HepG2 (cell line): ENCODE measurements at regions of chr14 and their contacts with region 1.

Region 1: DNA sequence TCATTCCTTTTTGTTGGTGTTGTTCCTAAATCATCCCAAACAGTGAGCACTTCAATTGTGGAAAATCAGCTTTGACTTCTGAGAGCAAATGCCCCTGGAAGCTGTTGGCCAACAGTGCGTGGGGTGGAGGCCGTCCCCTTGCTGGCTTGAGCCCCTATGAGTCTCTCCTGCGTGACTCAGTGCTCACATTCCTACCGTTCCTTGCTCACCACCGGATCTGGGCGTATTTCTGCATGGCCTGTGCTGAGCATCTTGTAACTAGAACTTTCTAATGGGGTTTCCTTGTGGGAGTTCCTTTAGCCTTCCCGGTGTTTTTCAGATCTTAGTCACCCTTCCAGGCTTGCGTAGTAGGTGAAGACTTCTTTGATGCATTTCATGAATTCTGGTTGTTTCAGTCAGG is 14.7 kb downstream of the SERPINA1 start:
- DNase-seq: no peak
- ATAC-seq: no peak
- H3K4me3 ChIP-seq: no peak overlapping the region
- H3K27ac ChIP-seq: no peak overlapping the region
- H3K4me1 ChIP-seq: peaks cover 100% of the 10 kb centered on the region
- H3K27me3 ChIP-seq: no peaks in the 10 kb centered on the region
- CTCF ChIP-seq: no peak
- EP300 ChIP-seq: no peak
- POLR2A ChIP-seq: no peak
- RAD21 ChIP-seq: no peak

Region 2: GRCh38 chr14:94322648-94323570 is 50.8 kb before region 1 on chr14 and contains the start of gene SERPINA6:
- CTCF ChIA-PET with region 1: no interaction called
- POLR2A ChIA-PET with region 1: interaction called, 10 read pairs
- in situ Hi-C with region 1: no loop called
- intact Hi-C with region 1: loop called (anchors 2 kb)
- DNase-seq: peak; percentile 95
- ATAC-seq: peak; percentile 92
- H3K4me3 ChIP-seq: peak within 1 kb of the TSS; percentile 61 to 87 (median 67)
- H3K27ac ChIP-seq: peak within 1 kb of the TSS; percentile 87
- H3K4me1 ChIP-seq: peaks cover 72% of the 10 kb centered on the region
- H3K27me3 ChIP-seq: no peaks in the 10 kb centered on the region
- CTCF ChIP-seq: no peak
- EP300 ChIP-seq: peak in 1 of 2 experiments; percentile 60; a peak in 2 of 4 replicates
- POLR2A ChIP-seq: peak; percentile 84 to 99
- RAD21 ChIP-seq: peak; percentile 31; the same call in 1 of the 2 replicates
- total RNA-seq, gene SERPINA6: 144 and 260 TPM in 2 replicates

Region 3: GRCh38 chr14:94342334-94342934 is 31.3 kb before region 1 on chr14:
- CTCF ChIA-PET with region 1: no interaction called
- POLR2A ChIA-PET with region 1: interaction called, 10 read pairs
- in situ Hi-C with region 1: no loop called
- intact Hi-C with region 1: loop called (anchors 1 kb)
- DNase-seq: peak; percentile 82
- ATAC-seq: peak; percentile 25; the same call in 2 of the 3 replicates
- H3K4me3 ChIP-seq: no peak overlapping the region
- H3K27ac ChIP-seq: no peak overlapping the region
- H3K4me1 ChIP-seq: peaks cover 96% of the 10 kb centered on the region
- H3K27me3 ChIP-seq: no peaks in the 10 kb centered on the region; a peak in 1 of 5 replicates
- CTCF ChIP-seq: no peak
- EP300 ChIP-seq: peak in 1 of 2 experiments; percentile 45; a peak in 1 of 4 replicates
- POLR2A ChIP-seq: no peak
- RAD21 ChIP-seq: no peak

Region 4: DNA sequence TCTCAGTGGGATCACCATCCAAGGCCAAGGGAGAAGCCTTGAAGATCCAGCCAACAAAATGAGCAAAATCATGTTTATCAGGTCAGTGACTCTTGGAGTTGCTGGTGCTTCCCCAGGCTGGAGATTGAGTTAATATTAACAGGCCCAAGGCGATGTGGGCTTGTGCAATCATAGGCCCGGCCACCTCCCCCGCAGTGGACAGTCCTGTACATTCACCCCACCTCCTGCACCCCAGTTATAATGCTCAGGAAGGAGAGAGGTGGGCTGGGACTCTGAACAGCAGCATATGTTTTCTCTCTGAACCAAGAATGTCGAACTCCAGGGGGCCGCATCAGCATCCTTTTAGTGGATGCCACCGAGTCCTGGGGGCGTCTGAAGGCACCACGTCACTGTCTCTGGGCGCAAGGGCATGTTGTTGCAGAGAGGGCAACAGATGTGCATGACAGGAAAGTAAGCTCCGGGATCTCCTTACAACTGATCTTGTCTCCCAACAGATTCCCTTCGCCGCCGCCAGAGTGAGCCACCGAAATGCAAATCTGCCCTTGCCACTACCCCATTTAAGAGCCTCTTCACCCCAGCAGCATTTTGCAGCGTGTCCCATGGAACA is 18.4 kb before region 1 on chr14:
- CTCF ChIA-PET with region 1: interaction called, 3 read pairs
- POLR2A ChIA-PET with region 1: interaction called, 13 read pairs
- in situ Hi-C with region 1: no loop called
- intact Hi-C with region 1: loop called (anchors 1 kb)
- DNase-seq: peak; percentile 85
- ATAC-seq: peak; percentile 95
- H3K4me3 ChIP-seq: peak overlapping the region; percentile 40 to 65 (median 44); a peak in 5 of 6 replicates
- H3K27ac ChIP-seq: peak overlapping the region; percentile 63
- H3K4me1 ChIP-seq: peaks cover 61% of the 10 kb centered on the region
- H3K27me3 ChIP-seq: no peaks in the 10 kb centered on the region
- CTCF ChIP-seq: peak; percentile 88
- EP300 ChIP-seq: peak in 1 of 2 experiments; percentile 54; a peak in 2 of 4 replicates
- POLR2A ChIP-seq: peak in 1 of 2 experiments; percentile 34; a peak in 1 of 4 replicates
- RAD21 ChIP-seq: peak; percentile 80

Region 5: GRCh38 chr14:94360945-94361565 is 12.7 kb before region 1 on chr14:
- CTCF ChIA-PET with region 1: interaction called, 3 read pairs
- POLR2A ChIA-PET with region 1: interaction called, 13 read pairs
- in situ Hi-C with region 1: no loop called
- intact Hi-C with region 1: no loop called
- DNase-seq: peak; percentile 50
- ATAC-seq: peak; percentile 42
- H3K4me3 ChIP-seq: peak overlapping the region in 1 of 3 experiments; percentile 18; a peak in 2 of 6 replicates
- H3K27ac ChIP-seq: peak overlapping the region; percentile 29
- H3K4me1 ChIP-seq: peaks cover 82% of the 10 kb centered on the region
- H3K27me3 ChIP-seq: no peaks in the 10 kb centered on the region
- CTCF ChIP-seq: no peak
- EP300 ChIP-seq: peak in 1 of 2 experiments; percentile 88; a peak in 2 of 4 replicates
- POLR2A ChIP-seq: no peak
- RAD21 ChIP-seq: no peak

Region 6: GRCh38 chr14:94412671-94413638 is 39.2 kb after region 1 on chr14:
- CTCF ChIA-PET with region 1: interaction called, 4 read pairs
- POLR2A ChIA-PET with region 1: interaction called, 39 read pairs
- in situ Hi-C with region 1: loop called (anchors 5 kb)
- intact Hi-C with region 1: loop called (anchors 2 kb)
- DNase-seq: peak; percentile 70
- ATAC-seq: peak; percentile 90
- H3K4me3 ChIP-seq: peak overlapping the region in 1 of 3 experiments; percentile 9; a peak in 1 of 6 replicates
- H3K27ac ChIP-seq: peak overlapping the region; percentile 48
- H3K4me1 ChIP-seq: peaks cover 77% of the 10 kb centered on the region
- H3K27me3 ChIP-seq: no peaks in the 10 kb centered on the region
- CTCF ChIP-seq: peak; percentile 94
- EP300 ChIP-seq: no peak
- POLR2A ChIP-seq: no peak
- RAD21 ChIP-seq: peak; percentile 92

Region 7: GRCh38 chr14:94494085-94494484 is 120.4 kb after region 1 on chr14:
- CTCF ChIA-PET with region 1: no interaction called
- POLR2A ChIA-PET with region 1: no interaction called
- in situ Hi-C with region 1: no loop called
- intact Hi-C with region 1: no loop called
- DNase-seq: no peak
- ATAC-seq: no peak
- H3K4me3 ChIP-seq: no peak overlapping the region
- H3K27ac ChIP-seq: no peak overlapping the region
- H3K4me1 ChIP-seq: peaks cover 45% of the 10 kb centered on the region
- H3K27me3 ChIP-seq: no peaks in the 10 kb centered on the region
- CTCF ChIP-seq: no peak
- EP300 ChIP-seq: no peak
- POLR2A ChIP-seq: no peak
- RAD21 ChIP-seq: no peak